ENCODE measurements at regions of chr22 and their contacts with region 1.

Region 1: GRCh38 chr22:46367707-46368191 is 32.2 kb downstream of the TRMU start:
- DNase-seq: peak; percentile 90
- CTCF ChIP-seq: peak; percentile 99

Region 2: DNA sequence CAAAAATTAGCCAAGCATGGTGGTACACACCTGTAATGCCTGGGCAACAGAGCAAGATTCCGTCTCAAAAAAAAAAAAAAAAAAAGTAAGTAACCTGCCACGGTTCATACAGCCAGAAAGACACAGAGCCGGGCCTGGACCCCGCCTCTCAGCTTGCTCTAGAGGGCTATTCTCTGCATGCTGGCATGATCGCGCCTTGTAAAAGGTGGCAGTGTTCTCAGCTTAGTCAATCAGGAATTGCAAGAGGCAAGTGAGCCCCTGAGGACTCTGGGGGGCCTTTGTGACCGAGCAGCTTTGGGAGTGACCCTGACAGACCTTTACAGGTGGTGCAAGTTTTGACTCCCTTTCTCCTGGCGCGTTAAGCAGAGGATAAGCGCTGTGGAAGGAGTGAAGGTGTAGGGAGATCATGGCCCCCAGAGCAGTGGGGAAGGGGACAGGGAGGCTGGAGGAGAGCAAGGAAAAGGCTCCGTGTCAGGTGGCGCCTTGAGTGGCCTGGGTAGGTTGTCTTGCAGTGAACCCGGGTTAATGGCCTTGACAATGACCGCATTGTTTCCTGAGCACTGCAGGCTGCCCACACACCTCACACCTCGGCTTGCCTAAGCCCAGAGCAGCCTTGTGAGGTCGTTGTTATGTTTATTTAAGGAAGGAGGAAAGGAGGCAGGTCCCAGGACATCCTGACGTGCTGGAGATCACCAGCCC is 166.5 kb before region 1 on chr22:
- CTCF ChIA-PET with region 1: no interaction called
- POLR2A ChIA-PET with region 1: no interaction called
- DNase-seq: no peak
- CTCF ChIP-seq: no peak

Region 3: GRCh38 chr22:46250035-46250782 is 117.5 kb before region 1 on chr22 and contains the start of gene CDPF1:
- CTCF ChIA-PET with region 1: no interaction called
- POLR2A ChIA-PET with region 1: no interaction called
- DNase-seq: peak; percentile 96
- CTCF ChIP-seq: no peak

Region 4: DNA sequence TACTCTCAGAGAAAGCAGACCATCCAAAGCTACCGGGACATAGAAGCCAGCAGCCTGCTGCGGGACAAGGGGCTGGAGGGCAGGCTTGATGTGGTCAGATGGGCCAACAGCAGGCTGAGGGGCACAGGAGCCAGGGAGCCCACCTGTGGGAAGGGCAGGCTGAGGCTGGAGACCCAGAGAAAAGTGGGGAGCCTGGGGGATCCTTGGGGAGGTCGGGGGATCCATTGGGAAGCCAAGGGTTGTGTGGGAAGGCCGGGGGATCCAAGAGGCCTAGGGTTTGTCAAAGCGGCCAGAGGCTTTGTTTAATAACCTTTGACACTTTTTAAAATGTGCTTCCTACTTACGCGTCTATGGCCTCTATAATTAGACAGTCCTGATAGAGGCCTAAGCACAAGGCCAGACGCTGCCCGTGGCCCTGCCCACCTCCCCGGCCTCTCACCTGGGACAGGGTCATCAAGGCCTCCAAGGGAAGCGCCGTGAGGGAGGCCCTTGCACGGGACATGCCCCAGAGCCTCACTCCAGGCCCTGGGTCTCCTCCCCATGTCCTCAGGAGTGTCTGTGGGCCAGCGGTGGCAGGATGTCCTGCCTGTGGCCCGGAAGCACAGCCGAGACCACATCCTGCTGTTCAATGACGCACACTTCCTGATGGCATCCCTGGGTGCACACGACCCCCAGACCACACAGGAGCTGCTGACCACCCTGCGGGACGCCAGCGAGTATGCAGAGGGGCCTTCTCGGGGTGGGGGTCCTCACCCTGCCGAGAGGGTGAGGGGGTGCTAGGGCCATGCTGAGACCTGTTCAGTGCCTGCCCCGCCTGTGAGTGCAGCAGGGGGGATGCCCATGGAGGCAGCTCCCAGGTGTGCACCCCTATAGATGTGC is 79.6 kb before region 1 on chr22:
- CTCF ChIA-PET with region 1: no interaction called
- POLR2A ChIA-PET with region 1: no interaction called
- DNase-seq: peak; percentile 87
- CTCF ChIP-seq: no peak

Region 5: GRCh38 chr22:46355371-46355995 is 12.3 kb before region 1 on chr22:
- CTCF ChIA-PET with region 1: interaction called, 27 read pairs
- POLR2A ChIA-PET with region 1: no interaction called
- DNase-seq: peak; percentile 80
- CTCF ChIP-seq: peak; percentile 62

Region 6: GRCh38 chr22:46469711-46470110 is 102.0 kb after region 1 on chr22:
- CTCF ChIA-PET with region 1: interaction called, 10 read pairs
- POLR2A ChIA-PET with region 1: no interaction called
- DNase-seq: no peak
- CTCF ChIP-seq: no peak

Region 7: GRCh38 chr22:46542011-46542985 is 174.5 kb after region 1 on chr22:
- CTCF ChIA-PET with region 1: interaction called, 111 read pairs
- POLR2A ChIA-PET with region 1: no interaction called
- DNase-seq: peak; percentile 92
- CTCF ChIP-seq: peak; percentile 98

Region 8: DNA sequence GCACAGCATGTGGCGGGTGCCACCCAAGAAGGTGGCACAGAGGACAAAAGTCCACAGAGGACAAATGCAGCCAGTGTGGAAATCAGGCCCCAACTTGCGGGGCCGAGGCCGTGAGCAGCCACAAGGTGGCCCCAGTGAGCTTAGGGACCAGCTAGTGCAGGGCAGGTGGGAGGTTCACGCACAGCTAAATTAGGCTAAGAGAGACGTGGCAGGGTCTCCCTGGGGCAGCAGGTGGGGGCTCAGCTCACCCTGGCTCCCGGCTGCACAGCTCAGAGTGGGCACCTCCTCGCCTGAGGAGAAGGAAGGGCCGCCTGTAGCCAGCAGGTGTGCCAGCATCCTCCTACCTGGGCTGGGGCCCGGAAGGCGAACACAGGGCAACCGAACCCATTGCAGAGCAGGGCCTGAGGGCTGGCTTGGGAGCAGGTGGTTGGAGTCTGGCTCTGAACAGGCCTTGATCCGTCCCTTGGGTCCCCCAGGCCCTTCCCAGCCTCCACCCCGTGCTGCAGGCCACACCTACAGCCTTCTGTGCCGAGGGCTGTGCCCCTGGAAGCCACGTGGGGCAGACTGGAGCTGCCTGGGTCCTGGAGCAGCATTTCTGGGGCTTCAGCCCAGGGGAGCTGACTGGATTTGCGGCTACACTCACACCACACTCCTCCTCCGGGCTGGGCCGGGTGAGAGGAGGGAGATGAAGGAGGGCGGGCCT is 195.8 kb after region 1 on chr22:
- CTCF ChIA-PET with region 1: interaction called, 13 read pairs
- POLR2A ChIA-PET with region 1: no interaction called
- DNase-seq: peak; percentile 85
- CTCF ChIP-seq: peak; percentile 93